CD4-positive, alpha-beta memory T cell (primary cell): ENCODE measurements at regions of chr12 and their contacts with region 1.

Region 1: DNA sequence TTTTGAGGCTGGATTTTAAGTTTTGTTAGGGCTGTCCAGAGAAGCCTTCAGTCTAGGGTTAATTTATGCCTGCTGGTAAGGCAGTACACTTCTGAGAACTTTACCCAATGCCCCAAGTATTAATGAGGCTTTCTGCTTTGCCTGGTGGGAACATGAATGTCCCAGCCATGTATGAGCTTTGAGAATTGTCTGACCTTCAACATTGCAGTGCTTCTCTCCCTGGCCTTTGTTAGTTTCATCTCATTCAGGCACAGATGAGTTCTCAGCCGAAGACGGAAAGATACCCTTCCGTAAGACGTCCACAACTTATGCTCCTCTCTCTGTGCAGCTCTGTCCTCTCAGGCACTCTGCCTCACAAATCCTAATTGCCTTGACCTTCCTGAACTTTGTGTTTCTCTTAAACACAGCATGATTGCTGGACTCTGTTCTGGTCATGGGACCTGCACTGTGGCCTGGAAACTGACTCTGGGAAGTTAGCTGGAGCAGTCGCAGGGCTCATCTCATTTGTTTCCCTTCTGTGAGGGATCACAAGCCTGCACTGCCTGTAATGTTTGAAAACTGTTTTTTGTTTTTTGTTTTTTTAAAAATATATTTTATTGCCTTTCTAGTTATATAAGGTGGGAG is 15.7 kb downstream of the CHPT1 start:
- DNase-seq: no peak
- H3K4me3 ChIP-seq: no peak overlapping the region
- H3K4me3 Mint-ChIP-seq: no peak overlapping the region
- H3K27ac ChIP-seq: no peak overlapping the region
- H3K27ac Mint-ChIP-seq: peak overlapping the region in 2 of 7 donors; percentile 1 to 14
- H3K4me1 ChIP-seq: peaks cover 14% of the 10 kb centered on the region
- H3K4me1 Mint-ChIP-seq: peaks cover 6 to 14% (median 11%) of the 10 kb centered on the region in 4 donors
- H3K27me3 ChIP-seq: no peaks in the 10 kb centered on the region
- H3K27me3 Mint-ChIP-seq: no peaks in the 10 kb centered on the region

Region 2: DNA sequence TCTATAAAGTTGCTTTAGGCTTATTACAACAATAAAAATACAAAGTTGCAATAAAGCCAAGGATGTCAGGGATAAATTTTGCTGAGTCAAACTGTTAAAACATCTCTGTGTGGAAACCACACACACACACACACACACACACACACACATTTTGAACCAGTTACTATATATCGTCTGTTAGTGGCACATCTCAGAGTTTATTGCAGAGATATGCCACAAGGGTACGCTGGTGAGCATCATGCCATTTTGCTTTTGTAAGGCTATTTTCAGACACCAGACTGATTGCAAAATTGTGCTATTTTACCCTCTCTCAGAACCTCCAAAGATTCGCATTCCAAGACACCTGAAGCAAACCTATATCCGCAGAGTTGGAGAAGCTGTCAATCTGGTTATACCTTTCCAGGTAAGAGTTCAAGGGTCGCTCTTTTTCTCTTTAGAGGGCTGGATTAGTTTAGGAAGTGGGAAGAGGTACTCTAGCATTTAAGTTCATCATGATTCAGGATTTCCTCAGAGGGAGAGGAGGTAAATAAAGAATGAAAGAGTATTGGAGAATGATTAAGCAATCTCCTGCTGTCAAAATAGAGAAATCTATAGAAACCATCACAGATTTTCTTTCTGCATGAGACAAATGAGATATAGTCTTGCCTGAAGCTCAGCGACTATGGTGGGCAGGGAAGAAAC is 43.0 kb before region 1 on chr12:
- CTCF ChIA-PET with region 1: no interaction called
- POLR2A ChIA-PET with region 1: no interaction called
- intact Hi-C with region 1: loop called (anchors 5 kb)
- DNase-seq: peak; percentile 37 to 67 (median 47)
- H3K4me3 ChIP-seq: no peak overlapping the region
- H3K4me3 Mint-ChIP-seq: peak overlapping the region in 1 of 8 donors; percentile 80
- H3K27ac ChIP-seq: no peak overlapping the region
- H3K27ac Mint-ChIP-seq: peak overlapping the region in 3 of 7 donors; percentile 4 to 66 (median 24)
- H3K4me1 ChIP-seq: peaks cover 21% of the 10 kb centered on the region
- H3K4me1 Mint-ChIP-seq: peaks cover 14 to 28% (median 21%) of the 10 kb centered on the region in 4 donors
- H3K27me3 ChIP-seq: no peaks in the 10 kb centered on the region
- H3K27me3 Mint-ChIP-seq: peaks cover 0 to 7% of the 10 kb centered on the region in 2 donors

Region 3: GRCh38 chr12:102095675-102096263 is 382.6 kb after region 1 on chr12:
- CTCF ChIA-PET with region 1: no interaction called
- POLR2A ChIA-PET with region 1: no interaction called
- intact Hi-C with region 1: no loop called
- DNase-seq: peak in 2 of 5 donors; percentile 3 to 6
- H3K4me3 ChIP-seq: no peak overlapping the region
- H3K4me3 Mint-ChIP-seq: no peak overlapping the region
- H3K27ac ChIP-seq: no peak overlapping the region
- H3K27ac Mint-ChIP-seq: peak overlapping the region in 1 of 7 donors; percentile 33
- H3K4me1 ChIP-seq: no peaks in the 10 kb centered on the region
- H3K4me1 Mint-ChIP-seq: peaks cover 0 to 2% (median 0%) of the 10 kb centered on the region in 4 donors
- H3K27me3 ChIP-seq: no peaks in the 10 kb centered on the region
- H3K27me3 Mint-ChIP-seq: no peaks in the 10 kb centered on the region